Mammary epithelial cell (primary cell): ENCODE measurements at regions of chrX and their contacts with region 1.

Region 1: DNA sequence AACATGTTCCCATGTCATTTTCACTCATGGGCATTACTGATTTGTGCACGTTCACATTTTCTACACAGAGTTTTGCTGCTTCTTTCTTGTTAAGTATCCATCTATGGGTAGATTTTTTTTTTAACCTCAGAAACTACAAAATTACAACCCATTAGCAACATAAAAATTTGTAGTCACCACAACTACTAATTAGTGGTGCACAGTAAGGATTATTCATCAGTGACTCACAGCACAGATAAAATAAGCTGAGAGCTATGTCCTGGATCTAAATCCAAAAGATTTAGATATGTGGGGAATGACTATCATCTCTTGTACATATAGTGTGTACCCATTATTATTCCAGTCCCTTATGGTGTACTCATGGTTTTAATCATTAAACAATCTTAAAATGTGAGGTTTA is 19.7 kb upstream of the AMELX start:
- DNase-seq: peak; percentile 40
- H3K4me3 ChIP-seq: no peak overlapping the region
- H3K27ac ChIP-seq: no peak overlapping the region
- H3K4me1 ChIP-seq: no peaks in the 10 kb centered on the region
- H3K27me3 ChIP-seq: no peaks in the 10 kb centered on the region
- CTCF ChIP-seq: no peak

Region 2: GRCh38 chrX:11188664-11189063 is 84.9 kb before region 1 on chrX:
- CTCF ChIA-PET with region 1: no interaction called
- dilution Hi-C with region 1: no loop called
- in situ Hi-C with region 1: no loop called
- intact Hi-C with region 1: loop called (anchors 10 kb)
- DNase-seq: peak; percentile 74
- H3K4me3 ChIP-seq: no peak overlapping the region
- H3K27ac ChIP-seq: peak overlapping the region; percentile 72
- H3K4me1 ChIP-seq: peaks cover 15% of the 10 kb centered on the region
- H3K27me3 ChIP-seq: no peaks in the 10 kb centered on the region
- CTCF ChIP-seq: no peak